ENCODE measurements at regions of chr7 and their contacts with region 1.

Region 1: GRCh38 chr7:33459340-33459751 is 330.0 kb downstream of the BBS9 start:
- DNase-seq: no peak
- ATAC-seq: peak; percentile 68 to 94 (median 80)
- H3K4me3 ChIP-seq: no peak overlapping the region
- H3K27ac ChIP-seq: no peak overlapping the region
- H3K4me1 ChIP-seq: no peaks in the 10 kb centered on the region
- H3K27me3 ChIP-seq: no peaks in the 10 kb centered on the region
- CTCF ChIP-seq: peak; percentile 55

Region 2: GRCh38 chr7:33334349-33334748 is 125.0 kb before region 1 on chr7:
- intact Hi-C with region 1: no loop called
- DNase-seq: no peak
- ATAC-seq: no peak
- H3K4me3 ChIP-seq: no peak overlapping the region
- H3K27ac ChIP-seq: no peak overlapping the region
- H3K4me1 ChIP-seq: no peaks in the 10 kb centered on the region
- H3K27me3 ChIP-seq: no peaks in the 10 kb centered on the region
- CTCF ChIP-seq: peak; percentile 21

Region 3: GRCh38 chr7:33716581-33717477 is 257.5 kb after region 1 on chr7:
- intact Hi-C with region 1: loop called in 1 of 2 experiments (anchors 10 kb)
- DNase-seq: no peak
- ATAC-seq: peak in 1 of 4 donors; percentile 52
- H3K4me3 ChIP-seq: no peak overlapping the region
- H3K27ac ChIP-seq: no peak overlapping the region
- H3K4me1 ChIP-seq: peaks cover 7% of the 10 kb centered on the region
- H3K27me3 ChIP-seq: no peaks in the 10 kb centered on the region
- CTCF ChIP-seq: peak; percentile 73